ENCODE measurements at regions of chr12 and their contacts with region 1.

Region 1: GRCh38 chr12:15220994-15221885 is at the start of gene RERG:
- DNase-seq: peak; percentile 76
- H3K4me3 Mint-ChIP-seq: no peak within 1 kb of the TSS
- H3K27ac Mint-ChIP-seq: no peak within 1 kb of the TSS
- H3K4me1 Mint-ChIP-seq: peaks cover 5% of the 10 kb centered on the region
- H3K27me3 Mint-ChIP-seq: peaks cover 38% of the 10 kb centered on the region
- total RNA-seq, gene RERG: not detected

Region 2: GRCh38 chr12:14723763-14724162 is 497.5 kb before region 1 on chr12:
- CTCF ChIA-PET with region 1: interaction called, 15 read pairs
- POLR2A ChIA-PET with region 1: no interaction called
- DNase-seq: peak; percentile 63
- H3K4me3 Mint-ChIP-seq: no peak overlapping the region
- H3K27ac Mint-ChIP-seq: no peak overlapping the region
- H3K4me1 Mint-ChIP-seq: no peaks in the 10 kb centered on the region
- H3K27me3 Mint-ChIP-seq: peaks cover 16% of the 10 kb centered on the region

Region 3: GRCh38 chr12:14845350-14845750 is 375.9 kb before region 1 on chr12:
- CTCF ChIA-PET with region 1: interaction called, 10 read pairs
- POLR2A ChIA-PET with region 1: no interaction called
- DNase-seq: peak; percentile 39
- H3K4me3 Mint-ChIP-seq: no peak overlapping the region
- H3K27ac Mint-ChIP-seq: no peak overlapping the region
- H3K4me1 Mint-ChIP-seq: peaks cover 2% of the 10 kb centered on the region
- H3K27me3 Mint-ChIP-seq: peaks cover 3% of the 10 kb centered on the region

Region 4: GRCh38 chr12:15186597-15186996 is 34.6 kb before region 1 on chr12:
- CTCF ChIA-PET with region 1: interaction called, 12 read pairs
- POLR2A ChIA-PET with region 1: no interaction called
- DNase-seq: no peak
- H3K4me3 Mint-ChIP-seq: no peak overlapping the region
- H3K27ac Mint-ChIP-seq: no peak overlapping the region
- H3K4me1 Mint-ChIP-seq: no peaks in the 10 kb centered on the region
- H3K27me3 Mint-ChIP-seq: no peaks in the 10 kb centered on the region

Region 5: DNA sequence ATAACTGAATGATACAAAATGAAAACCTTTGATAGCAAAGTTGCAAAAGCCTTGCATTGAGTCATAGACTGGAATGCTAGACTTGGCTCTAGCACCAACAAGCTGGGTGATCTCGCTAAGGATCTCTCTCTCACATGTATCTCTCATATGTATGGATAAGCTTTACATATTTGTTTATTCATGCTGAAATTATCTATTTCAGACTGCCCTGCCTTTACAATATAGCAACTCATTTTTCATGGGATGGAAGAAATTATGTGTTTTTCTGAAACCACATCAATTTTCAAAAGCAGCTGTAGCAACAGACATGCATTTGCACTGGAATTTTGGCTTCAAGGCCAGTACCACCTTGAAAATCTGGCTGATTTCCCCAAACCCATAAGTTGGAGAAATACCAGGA is 11.5 kb before region 1 on chr12:
- CTCF ChIA-PET with region 1: interaction called, 12 read pairs
- POLR2A ChIA-PET with region 1: interaction called, 4 read pairs
- DNase-seq: no peak
- H3K4me3 Mint-ChIP-seq: no peak overlapping the region
- H3K27ac Mint-ChIP-seq: no peak overlapping the region
- H3K4me1 Mint-ChIP-seq: no peaks in the 10 kb centered on the region
- H3K27me3 Mint-ChIP-seq: peaks cover 8% of the 10 kb centered on the region

Measured in activated CD4-positive, alpha-beta memory T cell treated with anti-CD3 and anti-CD28 coated beads, Interleukin-2, amount 10 ng/mL, durations not matched to agents 7 days and 5 days (primary cell).